GM18951 (cell line): ENCODE measurements at regions of chr19 and their contacts with region 1.

Region 1: GRCh38 chr19:30649934-30650614 is 277.9 kb downstream of the ZNF536 start:
- POLR2A ChIP-seq: no peak

Region 2: GRCh38 chr19:29745253-29745652 is 904.8 kb before region 1 on chr19:
- in situ Hi-C with region 1: loop called (anchors 25 kb)
- POLR2A ChIP-seq: no peak

Region 3: DNA sequence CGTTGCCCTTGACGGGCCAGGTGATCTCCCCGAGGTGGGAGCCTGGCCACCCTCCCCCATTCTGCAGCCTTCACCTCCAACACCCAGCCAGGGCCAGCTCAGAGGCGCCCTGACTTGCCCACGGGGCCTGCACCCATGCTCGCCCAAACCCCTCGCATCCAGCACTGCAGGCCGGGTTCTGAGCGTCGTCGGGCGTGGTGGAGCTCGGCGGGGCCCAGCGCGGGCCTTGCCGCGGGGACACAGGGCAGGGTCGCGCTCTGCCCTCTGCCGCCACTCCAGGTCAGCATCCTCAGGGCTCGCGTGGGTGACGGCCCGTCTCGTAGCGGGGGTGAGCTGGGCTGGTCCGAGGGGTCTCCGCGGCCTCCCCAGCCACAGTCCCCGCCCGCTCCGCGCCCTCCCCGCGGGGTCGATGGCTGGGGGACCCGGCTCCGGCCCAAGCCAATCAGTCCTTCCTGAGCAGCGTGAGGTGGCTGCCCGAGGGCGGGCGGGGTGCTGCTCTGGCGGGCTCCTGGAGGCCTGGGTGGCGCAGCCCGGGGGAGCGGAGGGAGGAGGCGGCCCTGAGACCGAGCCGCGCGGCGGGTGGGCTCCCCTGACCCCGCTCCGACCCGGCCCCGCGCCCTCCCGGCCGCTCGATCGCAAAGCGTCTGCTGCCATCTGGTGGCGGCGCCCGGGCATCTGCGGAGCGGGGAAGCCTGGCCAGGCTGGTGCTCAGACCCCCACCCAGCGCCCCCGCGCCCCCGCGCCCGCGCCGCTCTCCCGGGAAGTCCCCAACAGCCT is 776.9 kb before region 1 on chr19:
- in situ Hi-C with region 1: loop called (anchors 25 kb)
- POLR2A ChIP-seq: no peak

Region 4: DNA sequence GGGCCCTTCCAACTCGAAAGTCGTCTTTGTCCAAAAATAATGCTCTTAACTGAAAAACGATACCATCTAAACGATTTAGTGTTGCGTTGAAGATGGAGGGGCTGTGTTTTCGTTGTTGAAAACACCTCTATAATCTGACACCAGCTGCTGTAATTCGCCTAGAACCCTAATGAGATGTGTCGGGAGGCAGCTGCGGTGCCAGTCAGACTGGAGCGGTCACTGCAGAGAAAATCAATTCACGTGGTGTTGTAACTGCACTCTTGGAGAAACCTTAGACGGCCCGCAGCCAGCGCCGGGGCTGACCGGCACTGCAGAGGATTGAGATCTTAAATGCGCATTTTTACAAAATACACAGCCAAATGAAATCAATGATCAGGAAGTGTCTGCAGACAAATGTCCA is 61.2 kb after region 1 on chr19:
- in situ Hi-C with region 1: no loop called
- POLR2A ChIP-seq: no peak